ENCODE measurements at regions of chrX and their contacts with region 1.

Region 1: GRCh38 chrX:138771047-138771446 is 59.5 kb upstream of the FGF13 start:
- DNase-seq: no peak

Region 2: DNA sequence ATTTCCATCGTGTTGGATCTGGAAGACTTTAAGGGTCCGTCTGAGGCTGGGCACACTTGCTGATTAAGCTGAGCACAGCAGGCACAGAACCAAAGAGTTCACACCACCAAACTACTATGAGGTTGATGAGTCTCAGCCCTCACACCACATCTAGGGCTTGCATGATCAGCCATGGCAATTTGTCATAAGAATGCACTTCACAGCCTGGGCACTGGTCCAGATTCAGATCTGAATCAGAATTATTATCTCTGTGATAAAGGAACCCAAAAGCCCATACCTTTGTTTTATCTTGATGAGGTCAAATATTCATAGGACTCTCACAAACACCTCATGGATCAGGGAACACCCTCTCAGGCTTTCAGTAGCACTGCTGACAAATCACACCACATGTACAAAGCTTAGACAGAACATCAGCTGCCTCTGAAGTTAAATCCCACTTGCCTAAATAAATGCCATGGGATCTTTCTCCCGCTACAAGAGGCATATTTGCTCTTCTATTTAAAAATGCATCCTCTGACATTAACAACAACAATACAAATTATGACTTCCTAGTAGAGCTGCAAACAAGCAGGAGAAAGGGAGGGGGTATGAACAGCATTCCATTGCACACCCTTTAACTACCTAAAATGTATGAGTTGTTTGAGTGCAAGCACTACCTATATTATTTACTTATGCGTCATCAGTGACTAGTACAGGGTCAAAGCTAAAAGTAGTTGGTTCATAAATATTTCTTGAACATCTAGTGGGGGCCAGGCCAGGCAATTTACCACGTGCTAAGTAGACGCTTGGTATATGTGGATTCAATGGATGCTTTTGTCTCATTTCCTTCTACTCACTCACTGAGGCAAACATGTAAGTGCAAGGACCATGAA is 126.8 kb after region 1 on chrX:
- intact Hi-C with region 1: no loop called
- DNase-seq: no peak

Region 3: GRCh38 chrX:139559383-139560042 is 788.5 kb after region 1 on chrX:
- intact Hi-C with region 1: loop called (anchors 5 kb)
- DNase-seq: no peak